ENCODE measurements at regions of chr12 and their contacts with region 1.

Region 1: DNA sequence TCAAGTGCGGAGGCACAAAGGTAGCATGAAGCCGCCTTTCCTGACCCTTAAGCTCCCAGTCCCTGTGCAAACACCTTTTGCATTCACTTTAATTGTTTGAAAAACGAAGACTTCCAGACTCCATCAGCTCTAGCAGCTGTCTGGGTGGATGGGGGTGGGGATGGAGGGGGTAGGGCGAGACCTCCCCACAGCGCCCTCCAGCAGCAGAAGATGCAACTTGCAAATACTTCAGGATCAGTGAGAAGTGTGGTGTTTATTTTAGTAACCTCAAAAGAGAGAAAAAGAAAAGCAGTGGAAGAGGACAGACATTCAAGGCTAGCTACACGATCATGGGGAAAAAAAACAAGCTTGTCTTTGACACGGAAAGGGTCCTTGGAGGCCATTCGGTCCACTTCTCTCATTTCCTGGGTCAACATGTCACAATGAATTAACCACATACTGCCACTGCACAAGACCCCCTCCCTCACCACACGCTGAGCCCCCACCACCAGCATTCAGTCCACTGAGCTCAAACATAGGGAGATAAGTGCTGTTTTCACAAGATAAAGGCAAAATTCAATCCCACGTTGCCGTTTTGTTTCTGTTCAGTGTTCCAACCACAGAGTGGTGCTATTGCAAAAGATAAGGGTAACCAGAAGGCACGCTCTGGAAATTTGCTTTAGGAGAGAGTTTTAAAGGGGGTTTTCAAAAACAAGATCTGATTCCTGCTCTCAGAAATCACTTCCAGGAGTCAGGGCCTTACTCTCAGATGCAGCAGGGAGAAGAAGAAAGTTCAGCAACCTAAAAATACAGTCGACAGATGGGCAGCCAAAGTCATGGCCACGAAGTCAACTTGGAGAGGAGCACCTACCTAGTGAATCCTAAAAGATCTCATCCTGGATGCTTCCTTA is 3.3 kb upstream of the NTF3 start:
- DNase-seq: peak in 1 of 2 experiments; percentile 43
- H3K4me3 ChIP-seq: no peak overlapping the region
- H3K4me3 Mint-ChIP-seq: peak overlapping the region; percentile 52
- H3K27ac Mint-ChIP-seq: peak overlapping the region; percentile 32
- H3K4me1 ChIP-seq: peaks cover 19% of the 10 kb centered on the region
- H3K4me1 Mint-ChIP-seq: peaks cover 26% of the 10 kb centered on the region
- H3K27me3 ChIP-seq: no peaks in the 10 kb centered on the region
- H3K27me3 Mint-ChIP-seq: no peaks in the 10 kb centered on the region
- CTCF ChIP-seq: peak; percentile 46 to 56

Region 2: DNA sequence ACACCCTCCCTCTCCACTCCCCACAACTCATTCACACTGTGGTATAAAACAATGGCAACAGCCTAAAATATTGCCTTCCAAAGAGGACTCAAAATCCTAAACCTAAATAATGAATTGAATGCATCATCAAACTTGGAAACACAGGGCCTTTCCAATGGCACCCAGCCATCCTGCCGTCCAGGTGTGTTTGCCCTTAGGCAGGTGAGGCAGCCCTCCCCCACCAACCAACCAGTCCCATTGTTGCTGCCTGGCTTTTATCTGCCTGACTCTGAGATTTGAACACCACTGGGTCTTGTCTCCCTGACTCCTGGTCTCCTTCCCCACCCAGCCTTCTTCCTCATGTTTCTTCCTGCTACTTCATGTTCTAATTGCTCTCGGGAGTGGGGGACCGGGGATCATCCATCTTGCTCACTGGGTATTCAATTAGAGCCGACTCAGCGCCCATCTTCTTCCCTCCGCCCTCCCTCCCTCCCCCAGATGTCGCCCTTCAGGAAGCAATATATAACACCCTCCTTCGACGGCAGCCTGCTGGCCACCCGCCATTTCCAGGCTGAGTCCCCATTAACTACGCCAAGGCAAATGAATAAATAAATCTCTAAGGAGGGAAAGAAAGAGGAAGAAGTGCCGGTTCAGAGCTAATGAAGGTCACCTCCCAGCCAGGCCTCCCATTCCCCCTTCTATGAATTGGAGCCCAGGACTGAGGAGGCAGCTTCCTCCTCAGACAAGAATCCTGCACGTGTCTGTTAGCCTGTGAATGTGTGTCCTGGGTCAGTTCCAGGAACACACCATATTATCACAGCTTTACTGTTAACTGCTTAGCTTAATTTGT is 32.9 kb before region 1 on chr12:
- CTCF ChIA-PET with region 1: interaction called, 5 read pairs
- POLR2A ChIA-PET with region 1: no interaction called
- intact Hi-C with region 1: loop called (anchors 1 kb)
- DNase-seq: no peak
- H3K4me3 ChIP-seq: no peak overlapping the region
- H3K4me3 Mint-ChIP-seq: no peak overlapping the region
- H3K27ac Mint-ChIP-seq: peak overlapping the region; percentile 14
- H3K4me1 ChIP-seq: peaks cover 23% of the 10 kb centered on the region
- H3K4me1 Mint-ChIP-seq: peaks cover 15% of the 10 kb centered on the region
- H3K27me3 ChIP-seq: no peaks in the 10 kb centered on the region
- H3K27me3 Mint-ChIP-seq: no peaks in the 10 kb centered on the region
- CTCF ChIP-seq: no peak

Region 3: DNA sequence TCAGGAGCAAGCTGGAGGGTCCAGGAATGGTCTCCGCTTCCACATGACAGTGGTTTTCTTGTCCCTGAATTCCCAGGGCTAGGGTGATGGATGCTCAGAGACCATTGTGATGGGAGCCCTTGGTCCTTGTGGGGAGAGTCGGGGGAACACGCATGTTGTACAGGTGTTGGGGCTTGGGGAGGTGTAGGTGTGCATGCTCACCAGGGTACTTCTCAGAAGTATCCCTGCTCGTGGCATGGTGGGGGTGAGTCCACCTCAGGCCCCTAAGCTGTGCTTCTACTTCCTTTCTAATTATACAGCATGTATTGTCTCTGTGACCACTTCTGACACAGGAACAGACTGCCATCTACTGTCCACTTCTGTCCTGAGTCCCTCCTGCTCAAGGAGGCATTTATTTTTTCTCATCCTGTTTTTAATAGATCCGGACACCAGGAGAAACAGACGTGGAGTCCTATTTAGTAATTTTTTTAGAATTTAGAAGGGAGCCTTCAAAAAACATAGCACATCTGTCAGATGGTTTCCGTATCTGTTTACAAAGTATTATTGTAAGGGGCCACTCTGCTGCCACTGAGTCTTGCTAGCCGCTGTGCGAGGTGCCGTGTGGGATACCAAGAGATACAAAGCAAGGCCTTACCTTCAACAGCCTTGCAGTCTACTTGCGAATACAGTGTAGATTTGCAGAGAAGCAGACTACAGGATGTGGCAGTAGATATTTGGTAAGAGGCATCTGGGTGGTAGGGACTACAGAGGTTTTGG is 13.9 kb after region 1 on chr12:
- CTCF ChIA-PET with region 1: interaction called, 6 read pairs
- POLR2A ChIA-PET with region 1: no interaction called
- intact Hi-C with region 1: loop called (anchors 1 kb)
- DNase-seq: peak; percentile 65 to 76
- H3K4me3 ChIP-seq: no peak overlapping the region
- H3K4me3 Mint-ChIP-seq: no peak overlapping the region
- H3K27ac Mint-ChIP-seq: no peak overlapping the region
- H3K4me1 ChIP-seq: no peaks in the 10 kb centered on the region
- H3K4me1 Mint-ChIP-seq: peaks cover 7% of the 10 kb centered on the region
- H3K27me3 ChIP-seq: no peaks in the 10 kb centered on the region
- H3K27me3 Mint-ChIP-seq: no peaks in the 10 kb centered on the region
- CTCF ChIP-seq: peak; percentile 82 to 90

Region 4: GRCh38 chr12:5796171-5796958 is 367.8 kb after region 1 on chr12:
- CTCF ChIA-PET with region 1: interaction called, 4 read pairs
- POLR2A ChIA-PET with region 1: no interaction called
- intact Hi-C with region 1: loop called (anchors 2 kb)
- DNase-seq: peak; percentile 69 to 83
- H3K4me3 ChIP-seq: no peak overlapping the region
- H3K4me3 Mint-ChIP-seq: no peak overlapping the region
- H3K27ac Mint-ChIP-seq: no peak overlapping the region
- H3K4me1 ChIP-seq: no peaks in the 10 kb centered on the region
- H3K4me1 Mint-ChIP-seq: no peaks in the 10 kb centered on the region
- H3K27me3 ChIP-seq: no peaks in the 10 kb centered on the region
- H3K27me3 Mint-ChIP-seq: peaks cover 11% of the 10 kb centered on the region
- CTCF ChIP-seq: peak; percentile 93 to 96

Region 5: DNA sequence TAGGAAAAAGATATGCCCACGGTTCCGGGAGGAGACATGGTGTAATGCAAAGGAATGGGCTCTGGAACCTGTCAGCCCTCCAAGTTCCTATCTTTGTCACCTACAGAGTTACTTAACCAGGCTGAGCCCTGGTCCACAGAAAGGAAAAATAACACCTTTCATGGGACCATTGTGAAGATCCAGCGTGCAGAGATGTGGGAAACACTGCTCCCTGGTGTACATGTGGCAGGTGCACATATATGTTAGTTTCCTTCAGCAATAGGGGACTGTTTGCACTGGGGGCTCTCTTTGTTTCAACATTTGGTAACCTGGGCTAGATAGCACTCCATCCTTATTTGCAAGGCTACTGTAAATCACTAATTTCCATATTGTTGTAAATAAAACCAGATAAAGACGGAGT is 444.2 kb after region 1 on chr12:
- CTCF ChIA-PET with region 1: no interaction called
- POLR2A ChIA-PET with region 1: no interaction called
- intact Hi-C with region 1: loop called (anchors 2 kb)
- DNase-seq: peak in 1 of 2 experiments; percentile 36
- H3K4me3 ChIP-seq: no peak overlapping the region
- H3K4me3 Mint-ChIP-seq: no peak overlapping the region
- H3K27ac Mint-ChIP-seq: no peak overlapping the region
- H3K4me1 ChIP-seq: no peaks in the 10 kb centered on the region
- H3K4me1 Mint-ChIP-seq: no peaks in the 10 kb centered on the region
- H3K27me3 ChIP-seq: peaks cover 2% of the 10 kb centered on the region
- H3K27me3 Mint-ChIP-seq: peaks cover 25% of the 10 kb centered on the region
- CTCF ChIP-seq: peak; percentile 69 to 75

Region 6: GRCh38 chr12:6039894-6040568 is 611.5 kb after region 1 on chr12:
- CTCF ChIA-PET with region 1: interaction called, 3 read pairs
- POLR2A ChIA-PET with region 1: interaction called, 3 read pairs
- intact Hi-C with region 1: loop called (anchors 5 kb)
- DNase-seq: peak; percentile 75 to 82
- H3K4me3 ChIP-seq: no peak overlapping the region
- H3K4me3 Mint-ChIP-seq: no peak overlapping the region
- H3K27ac Mint-ChIP-seq: no peak overlapping the region
- H3K4me1 ChIP-seq: no peaks in the 10 kb centered on the region
- H3K4me1 Mint-ChIP-seq: no peaks in the 10 kb centered on the region
- H3K27me3 ChIP-seq: no peaks in the 10 kb centered on the region
- H3K27me3 Mint-ChIP-seq: peaks cover 6% of the 10 kb centered on the region
- CTCF ChIP-seq: peak; percentile 97 to 99